Transverse colon (tissue), 4 donors: ENCODE measurements at regions of chr22 and their contacts with region 1.

Region 1: DNA sequence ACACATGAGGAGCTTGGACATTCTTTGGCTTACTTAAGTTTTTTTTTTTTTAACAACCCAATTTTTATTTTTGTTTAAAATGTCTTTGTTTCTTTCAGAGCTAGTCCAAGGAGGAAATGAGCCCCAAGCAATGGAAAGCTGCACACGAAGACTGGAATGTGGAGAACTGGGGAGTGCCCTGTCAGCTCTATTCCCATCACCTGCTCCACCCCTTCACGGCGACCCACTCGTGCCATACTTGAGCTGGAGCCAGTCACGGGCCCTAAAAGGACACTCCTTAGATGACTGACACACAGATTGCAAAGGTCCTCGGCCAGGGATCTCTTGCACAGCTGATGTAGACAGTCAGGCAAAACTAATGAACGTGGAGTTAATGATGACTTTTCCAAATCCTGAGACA is 10.6 kb upstream of the SLC25A18 start:
- DNase-seq: no peak
- H3K4me3 ChIP-seq: no peak overlapping the region
- H3K27ac ChIP-seq: no peak overlapping the region
- H3K4me1 ChIP-seq: peaks cover 0 to 5% (median 0%) of the 10 kb centered on the region in 4 donors
- H3K27me3 ChIP-seq: no peaks in the 10 kb centered on the region
- CTCF ChIP-seq: no peak
- EP300 ChIP-seq: no peak
- POLR2A ChIP-seq: no peak

Region 2: GRCh38 chr22:16932577-16932976 is 620.2 kb before region 1 on chr22:
- in situ Hi-C with region 1: no loop called
- intact Hi-C with region 1: no loop called
- DNase-seq: no peak
- H3K4me3 ChIP-seq: no peak overlapping the region
- H3K27ac ChIP-seq: no peak overlapping the region
- H3K4me1 ChIP-seq: no peaks in the 10 kb centered on the region
- H3K27me3 ChIP-seq: peaks cover 10% of the 10 kb centered on the region
- CTCF ChIP-seq: no peak
- EP300 ChIP-seq: no peak
- POLR2A ChIP-seq: no peak

Region 3: GRCh38 chr22:17580441-17581031 is 27.8 kb after region 1 on chr22:
- in situ Hi-C with region 1: no loop called
- intact Hi-C with region 1: no loop called
- DNase-seq: no peak
- H3K4me3 ChIP-seq: no peak overlapping the region
- H3K27ac ChIP-seq: no peak overlapping the region
- H3K4me1 ChIP-seq: peaks cover 0 to 4% (median 0%) of the 10 kb centered on the region in 4 donors
- H3K27me3 ChIP-seq: no peaks in the 10 kb centered on the region
- CTCF ChIP-seq: no peak
- EP300 ChIP-seq: no peak
- POLR2A ChIP-seq: no peak

Region 4: DNA sequence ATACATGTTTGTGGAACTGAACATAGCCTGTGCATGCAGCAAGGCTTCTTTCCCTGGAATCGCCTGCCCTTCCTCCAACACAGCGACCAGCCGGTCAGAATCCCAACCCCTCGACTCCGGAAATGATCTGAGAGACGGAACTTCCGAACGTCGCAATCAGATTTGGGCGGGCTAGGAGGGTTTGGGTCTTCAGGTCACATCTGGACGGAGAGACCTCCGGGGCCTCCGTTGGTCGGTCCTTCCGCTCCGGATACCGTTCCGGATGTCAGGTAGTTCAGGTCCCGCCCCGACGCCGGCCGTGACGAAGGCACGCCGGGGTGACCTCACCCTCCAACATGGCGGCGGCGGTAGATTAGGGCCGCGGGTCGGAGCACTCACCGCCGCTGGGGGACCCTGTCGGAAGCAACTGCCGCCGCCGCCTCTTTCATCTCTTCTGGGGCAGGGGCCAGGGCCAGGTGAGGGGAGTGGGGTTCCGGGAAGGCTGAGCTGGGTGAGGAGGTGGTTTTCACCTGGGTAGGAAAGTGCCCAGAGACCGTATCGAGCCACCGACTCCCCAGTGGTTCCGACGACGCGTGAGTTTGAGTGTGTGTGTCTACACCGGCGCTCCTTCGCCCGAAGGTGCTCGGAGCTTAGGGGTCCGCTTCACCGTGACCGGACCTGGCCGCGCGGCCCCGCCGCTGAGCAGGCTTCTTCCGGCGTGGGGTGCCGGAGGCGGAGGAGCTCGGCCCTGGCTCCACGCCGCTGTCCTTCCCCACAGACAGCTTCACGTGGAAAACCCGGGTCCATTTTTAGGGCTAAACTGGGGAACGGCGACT is 85.9 kb after region 1 on chr22 and contains the start of gene BCL2L13:
- in situ Hi-C with region 1: no loop called
- intact Hi-C with region 1: loop called (anchors 10 kb)
- DNase-seq: peak; percentile 95
- H3K4me3 ChIP-seq: peak within 1 kb of the TSS; percentile 30 to 88 (median 68)
- H3K27ac ChIP-seq: peak within 1 kb of the TSS; percentile 97 to 99 (median 98)
- H3K4me1 ChIP-seq: peaks cover 0 to 25% (median 17%) of the 10 kb centered on the region in 4 donors
- H3K27me3 ChIP-seq: no peaks in the 10 kb centered on the region
- CTCF ChIP-seq: peak in 1 of 5 experiments; percentile 9
- EP300 ChIP-seq: no peak
- POLR2A ChIP-seq: peak; percentile 99
- total RNA-seq, gene BCL2L13: 44.0 to 115 (median 59.6) TPM

Region 5: GRCh38 chr22:17785185-17786184 is 232.7 kb after region 1 on chr22:
- in situ Hi-C with region 1: no loop called
- intact Hi-C with region 1: loop called (anchors 10 kb)
- DNase-seq: peak; percentile 84
- H3K4me3 ChIP-seq: no peak overlapping the region
- H3K27ac ChIP-seq: peak overlapping the region in 1 of 4 donors; percentile 71
- H3K4me1 ChIP-seq: peaks cover 7 to 47% (median 26%) of the 10 kb centered on the region in 4 donors
- H3K27me3 ChIP-seq: no peaks in the 10 kb centered on the region
- CTCF ChIP-seq: peak; percentile 56 to 83 (median 74)
- EP300 ChIP-seq: no peak
- POLR2A ChIP-seq: no peak